Activated CD4-positive, alpha-beta T cell treated with anti-CD3 and anti-CD28 coated beads for 36 hours (primary cell): ENCODE measurements at regions of chr5 and their contacts with region 1.

Region 1: DNA sequence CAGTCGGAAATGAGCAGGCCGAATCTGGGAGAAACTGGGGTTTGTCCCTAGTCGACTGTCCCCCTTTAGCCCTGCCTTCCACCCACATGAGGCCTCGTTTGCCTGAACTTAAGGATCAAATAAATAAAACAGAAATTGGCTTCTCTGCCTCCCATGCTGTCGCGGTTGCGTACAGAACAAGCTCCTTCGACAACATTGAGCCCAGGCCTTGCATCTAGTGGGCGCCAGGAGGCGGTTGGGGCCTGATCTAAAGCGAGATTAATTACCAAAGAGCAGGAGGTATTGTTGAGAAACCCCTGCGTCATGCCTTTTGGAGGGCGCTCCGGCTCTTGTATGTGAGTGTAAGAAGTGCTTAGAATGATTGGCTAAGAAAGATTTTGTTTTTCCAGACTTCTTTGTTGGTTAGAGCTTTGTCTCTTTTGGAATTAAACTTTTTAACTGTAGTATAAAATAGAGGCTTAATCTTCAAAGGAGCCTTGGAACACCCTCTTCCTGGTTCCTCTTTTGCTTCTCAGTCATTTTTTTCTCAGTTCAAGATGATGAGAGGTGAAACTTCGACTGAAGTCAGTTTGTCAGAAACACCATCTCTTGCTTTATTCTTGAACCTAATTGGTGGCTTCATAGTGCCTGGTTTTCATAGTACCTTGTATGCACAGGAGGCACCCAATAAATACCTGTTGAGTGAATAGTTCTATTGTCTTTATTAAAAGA is 827 bp downstream of the ATP6V0E1 start:
- DNase-seq: peak; percentile 90
- ATAC-seq: peak; percentile 79
- H3K4me3 Mint-ChIP-seq: peak overlapping the region; percentile 96
- H3K27ac Mint-ChIP-seq: peak overlapping the region; percentile 99
- H3K4me1 Mint-ChIP-seq: peaks cover 37% of the 10 kb centered on the region
- H3K27me3 Mint-ChIP-seq: no peaks in the 10 kb centered on the region

Region 2: DNA sequence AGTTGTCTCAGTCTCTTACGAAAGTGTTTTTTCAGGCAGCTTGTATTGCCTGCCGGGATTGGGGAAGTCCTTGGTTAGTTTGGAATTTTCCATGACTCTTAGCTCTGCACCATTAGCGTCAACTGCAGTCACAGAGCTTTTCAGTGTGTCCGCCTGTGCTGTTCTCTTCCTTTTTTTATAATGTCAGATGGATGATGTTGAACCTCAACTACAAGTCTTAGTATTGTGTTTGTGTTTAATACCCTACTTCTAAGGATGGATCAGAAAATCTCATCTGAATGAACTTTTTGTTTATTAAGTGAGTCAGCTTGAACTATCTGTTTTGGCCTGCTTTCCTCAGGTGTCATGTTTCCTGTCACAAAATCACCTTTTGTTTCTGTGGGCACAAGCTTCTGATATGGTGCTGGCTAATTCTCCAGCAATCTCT is 32.2 kb after region 1 on chr5:
- CTCF ChIA-PET with region 1: interaction called, 4 read pairs
- POLR2A ChIA-PET with region 1: interaction called, 10 read pairs
- intact Hi-C with region 1: no loop called
- DNase-seq: no peak
- ATAC-seq: peak; percentile 84
- H3K4me3 Mint-ChIP-seq: no peak overlapping the region
- H3K27ac Mint-ChIP-seq: peak overlapping the region; percentile 73
- H3K4me1 Mint-ChIP-seq: peaks cover 41% of the 10 kb centered on the region
- H3K27me3 Mint-ChIP-seq: no peaks in the 10 kb centered on the region

Region 3: DNA sequence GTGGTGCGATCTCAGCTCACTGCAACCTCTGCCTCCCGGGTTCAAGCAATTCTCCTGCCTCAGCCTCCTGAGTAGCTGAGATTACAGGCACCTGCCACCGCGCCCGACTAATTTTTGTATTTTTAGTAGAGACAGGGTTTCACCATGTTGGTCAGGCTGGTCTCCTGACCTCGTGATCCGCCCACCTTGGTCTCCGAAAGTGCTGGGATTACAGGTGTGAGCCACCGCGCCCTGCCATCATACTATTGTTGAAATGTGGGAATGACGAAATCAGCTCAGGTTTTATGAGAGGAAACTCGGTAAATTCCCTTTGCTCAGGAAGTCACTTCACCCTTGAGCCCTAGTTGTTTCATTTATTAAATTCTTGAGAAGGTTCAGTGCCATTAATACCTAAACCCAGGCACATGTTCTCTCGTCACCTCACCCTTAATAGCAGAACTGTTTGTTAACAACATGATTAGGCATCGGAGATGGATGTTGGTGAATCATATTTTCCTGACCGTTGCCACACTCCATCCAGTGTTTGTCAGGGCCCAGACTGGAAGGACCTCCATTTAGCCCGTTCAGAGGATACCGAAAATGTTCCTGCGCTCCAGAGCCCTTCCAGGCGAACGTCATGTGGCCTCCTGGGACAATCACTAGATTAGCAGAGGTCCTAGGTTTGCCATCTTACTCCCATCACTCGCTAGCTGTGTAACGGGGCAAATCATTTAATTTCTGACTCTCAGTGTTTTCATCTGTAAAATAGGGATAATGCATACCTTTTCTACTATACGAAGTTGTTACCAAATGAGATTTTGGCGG is 51.7 kb after region 1 on chr5:
- CTCF ChIA-PET with region 1: interaction called, 12 read pairs
- POLR2A ChIA-PET with region 1: interaction called, 9 read pairs
- intact Hi-C with region 1: loop called (anchors 1 kb)
- DNase-seq: peak; percentile 74
- ATAC-seq: peak; percentile 39
- H3K4me3 Mint-ChIP-seq: peak overlapping the region; percentile 59
- H3K27ac Mint-ChIP-seq: peak overlapping the region; percentile 96
- H3K4me1 Mint-ChIP-seq: peaks cover 62% of the 10 kb centered on the region
- H3K27me3 Mint-ChIP-seq: no peaks in the 10 kb centered on the region

Region 4: GRCh38 chr5:173065155-173065554 is 80.8 kb after region 1 on chr5:
- CTCF ChIA-PET with region 1: interaction called, 6 read pairs
- POLR2A ChIA-PET with region 1: interaction called, 3 read pairs
- intact Hi-C with region 1: loop called (anchors 2 kb)
- DNase-seq: no peak
- ATAC-seq: peak; percentile 88
- H3K4me3 Mint-ChIP-seq: peak overlapping the region; percentile 68
- H3K27ac Mint-ChIP-seq: peak overlapping the region; percentile 93
- H3K4me1 Mint-ChIP-seq: peaks cover 79% of the 10 kb centered on the region
- H3K27me3 Mint-ChIP-seq: no peaks in the 10 kb centered on the region

Region 5: GRCh38 chr5:173283318-173284288 is 299.2 kb after region 1 on chr5:
- CTCF ChIA-PET with region 1: no interaction called
- POLR2A ChIA-PET with region 1: no interaction called
- intact Hi-C with region 1: loop called (anchors 1 to 2 kb)
- DNase-seq: peak; percentile 90
- ATAC-seq: peak; percentile 96
- H3K4me3 Mint-ChIP-seq: peak overlapping the region; percentile 25
- H3K27ac Mint-ChIP-seq: no peak overlapping the region
- H3K4me1 Mint-ChIP-seq: peaks cover 9% of the 10 kb centered on the region
- H3K27me3 Mint-ChIP-seq: peaks cover 44% of the 10 kb centered on the region

Region 6: GRCh38 chr5:173573126-173573960 is 588.9 kb after region 1 on chr5:
- CTCF ChIA-PET with region 1: no interaction called
- POLR2A ChIA-PET with region 1: no interaction called
- intact Hi-C with region 1: loop called in 1 of 2 experiments (anchors 2 kb)
- DNase-seq: peak; percentile 80
- ATAC-seq: peak; percentile 76
- H3K4me3 Mint-ChIP-seq: no peak overlapping the region
- H3K27ac Mint-ChIP-seq: no peak overlapping the region
- H3K4me1 Mint-ChIP-seq: peaks cover 5% of the 10 kb centered on the region
- H3K27me3 Mint-ChIP-seq: peaks cover 12% of the 10 kb centered on the region